ENCODE measurements at regions of chrX and their contacts with region 1.

Region 1: DNA sequence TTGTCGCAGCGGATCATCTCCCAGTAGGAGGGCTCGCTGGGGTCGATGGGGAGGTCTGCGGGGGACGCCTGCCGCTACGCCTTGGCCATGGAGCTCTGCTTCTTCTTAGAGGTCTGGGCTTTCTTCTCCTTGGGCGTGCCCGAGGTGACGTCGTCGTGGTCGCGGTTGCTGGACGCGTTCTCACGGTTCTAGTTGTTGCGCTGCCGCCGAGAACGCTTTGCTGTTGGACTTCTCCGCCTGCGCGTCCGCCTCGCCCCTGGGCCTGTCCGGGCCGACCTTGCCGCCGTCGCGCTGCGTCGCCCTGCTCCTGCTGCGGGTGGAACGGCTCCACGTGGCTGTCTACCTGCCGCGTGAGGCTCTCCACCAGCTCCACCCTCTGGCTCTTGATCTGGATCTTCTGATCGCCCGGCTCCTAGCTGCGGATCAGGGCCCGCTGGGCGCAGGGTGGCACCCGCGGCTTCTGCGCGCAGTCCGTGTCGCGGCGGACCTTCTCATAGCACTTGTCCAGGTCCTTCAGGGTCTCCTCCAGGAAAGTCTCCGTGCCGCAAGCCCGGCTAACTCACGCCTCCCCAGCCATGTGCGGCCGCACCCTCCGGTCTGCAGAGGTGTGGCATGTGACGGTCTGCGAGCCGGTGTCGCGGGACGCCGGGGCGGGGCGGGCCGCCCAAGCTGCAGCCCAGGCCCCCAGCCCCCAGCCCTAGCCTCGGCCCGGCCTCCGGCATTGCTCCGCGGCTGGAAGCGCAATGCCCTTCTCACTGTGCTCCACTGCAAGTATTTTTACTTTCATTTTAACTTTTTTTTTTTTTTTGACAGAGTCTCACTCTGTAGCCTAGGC is 40.5 kb upstream of the OGT start:
- DNase-seq: peak; percentile 77
- H3K4me3 ChIP-seq: peak overlapping the region; percentile 33 to 61 (median 56)
- H3K27ac ChIP-seq: peak overlapping the region in 3 of 4 donors; percentile 39 to 65 (median 44)
- H3K4me1 ChIP-seq: peaks cover 0 to 5% (median 0%) of the 10 kb centered on the region in 4 donors
- H3K27me3 ChIP-seq: no peaks in the 10 kb centered on the region
- CTCF ChIP-seq: no peak
- EP300 ChIP-seq: no peak
- POLR2A ChIP-seq: no peak

Region 2: DNA sequence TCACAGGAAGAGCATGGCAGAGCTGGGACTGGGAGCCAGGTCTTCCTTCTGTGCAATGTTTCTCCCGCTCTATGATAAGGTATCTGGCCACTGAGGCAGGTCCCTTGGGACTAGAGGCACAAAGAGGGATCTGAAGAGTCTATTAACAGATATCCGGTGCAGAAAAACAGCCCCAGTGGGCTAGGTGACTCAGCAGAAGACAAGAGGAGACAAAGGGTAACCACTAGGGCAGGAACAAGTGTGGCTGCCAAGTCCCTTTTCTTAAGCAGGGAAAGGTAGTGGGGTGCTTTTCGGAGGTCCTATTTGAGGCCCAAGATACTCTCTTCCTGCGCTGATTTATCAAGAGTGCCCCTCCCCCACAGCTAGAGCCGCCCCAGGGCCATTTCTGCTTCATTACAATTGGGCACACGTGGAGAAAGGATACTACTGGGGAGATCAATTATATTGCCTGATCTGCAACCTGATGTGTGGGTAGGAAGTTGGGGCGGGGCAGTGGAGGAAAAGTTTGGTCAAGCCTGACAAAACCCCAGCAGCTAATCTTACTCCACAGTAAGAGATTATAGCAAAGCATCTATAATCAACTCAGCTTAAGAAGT is 1315.4 kb before region 1 on chrX and contains the start of gene DGAT2L6:
- intact Hi-C with region 1: no loop called
- DNase-seq: no peak
- H3K4me3 ChIP-seq: no peak within 1 kb of the TSS
- H3K27ac ChIP-seq: no peak within 1 kb of the TSS
- H3K4me1 ChIP-seq: no peaks in the 10 kb centered on the region
- H3K27me3 ChIP-seq: no peaks in the 10 kb centered on the region
- CTCF ChIP-seq: no peak
- EP300 ChIP-seq: no peak
- POLR2A ChIP-seq: no peak
- total RNA-seq, gene DGAT2L6: not detected

Region 3: DNA sequence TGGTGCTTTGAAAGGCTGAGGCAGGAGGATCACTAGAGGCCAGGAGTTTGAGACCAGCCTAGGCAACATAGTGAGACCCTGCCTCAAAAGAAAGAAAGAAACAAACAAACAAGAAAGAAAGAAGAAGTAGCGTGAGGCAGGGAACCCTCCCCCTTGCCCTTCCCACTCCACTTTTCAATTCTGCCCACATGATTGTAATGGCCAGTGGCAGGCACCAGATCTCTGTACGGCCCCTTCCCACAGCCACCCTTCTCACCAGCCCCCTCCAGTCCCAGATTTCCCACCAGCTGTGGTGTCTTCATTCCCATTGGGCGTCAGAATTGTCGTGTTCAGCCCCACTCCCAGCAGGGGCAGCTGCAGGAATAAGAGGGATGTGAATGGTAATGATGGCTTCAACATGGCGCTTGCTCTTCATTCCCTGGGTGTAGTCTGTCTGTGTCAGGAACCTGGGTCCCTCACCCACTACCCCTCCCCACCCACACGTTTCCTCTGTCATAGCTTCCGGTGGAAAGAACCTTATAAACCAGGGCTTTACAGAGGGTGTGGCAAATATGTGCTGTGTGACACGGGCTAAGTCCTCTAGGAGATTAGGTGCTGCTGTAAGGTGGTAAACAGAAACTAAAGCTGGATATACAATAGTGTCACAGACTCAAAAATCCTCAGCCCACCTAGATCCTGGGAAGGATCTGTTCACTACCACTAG is 381.2 kb before region 1 on chrX and contains the start of gene IL2RG:
- intact Hi-C with region 1: no loop called
- DNase-seq: no peak
- H3K4me3 ChIP-seq: no peak within 1 kb of the TSS
- H3K27ac ChIP-seq: no peak within 1 kb of the TSS
- H3K4me1 ChIP-seq: no peaks in the 10 kb centered on the region
- H3K27me3 ChIP-seq: no peaks in the 10 kb centered on the region
- CTCF ChIP-seq: no peak
- EP300 ChIP-seq: no peak
- POLR2A ChIP-seq: peak in 1 of 2 donors; percentile 20
- total RNA-seq, gene IL2RG: 1.7 to 8.1 (median 3.2) TPM in 3 of 4 donors, not detected in the other

Region 4: DNA sequence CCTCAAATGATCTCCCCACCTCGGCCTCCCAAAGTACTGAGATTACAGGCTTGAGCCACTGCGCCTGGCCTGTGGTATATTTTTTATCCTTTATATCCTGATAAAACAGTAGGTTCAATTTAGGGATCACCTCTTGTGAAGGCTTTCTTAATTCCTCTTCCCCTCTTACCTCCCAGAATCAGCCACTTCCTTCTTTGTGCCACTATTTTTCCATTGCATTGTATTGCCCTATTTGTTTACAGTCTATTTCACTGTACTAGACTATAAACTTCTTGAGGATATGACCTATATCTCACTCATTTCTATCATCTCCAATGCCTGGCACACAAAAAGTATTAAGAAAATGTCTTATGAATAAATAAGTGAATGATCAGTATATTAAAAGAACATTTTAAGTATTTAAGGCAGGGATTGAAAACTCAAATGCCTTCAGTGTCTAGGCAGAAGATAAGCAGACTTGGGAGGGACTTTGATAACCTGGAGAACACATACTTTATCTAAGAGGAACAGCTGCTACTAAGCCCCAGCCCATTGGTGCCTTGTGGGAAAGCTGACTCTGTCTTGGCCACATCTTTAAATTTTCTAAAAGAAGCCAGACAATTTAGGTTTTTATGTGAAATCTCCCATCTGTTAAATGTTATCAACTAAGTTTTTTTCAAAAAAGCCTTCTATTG is 41.9 kb before region 1 on chrX:
- intact Hi-C with region 1: no loop called
- DNase-seq: no peak
- H3K4me3 ChIP-seq: no peak overlapping the region
- H3K27ac ChIP-seq: no peak overlapping the region
- H3K4me1 ChIP-seq: no peaks in the 10 kb centered on the region
- H3K27me3 ChIP-seq: no peaks in the 10 kb centered on the region
- CTCF ChIP-seq: no peak
- EP300 ChIP-seq: no peak
- POLR2A ChIP-seq: no peak

Region 5: GRCh38 chrX:71532753-71533425 is 40.4 kb after region 1 on chrX and contains the start of gene OGT:
- intact Hi-C with region 1: loop called (anchors 5 kb)
- DNase-seq: peak; percentile 98
- H3K4me3 ChIP-seq: peak within 1 kb of the TSS; percentile 61 to 73 (median 66)
- H3K27ac ChIP-seq: peak within 1 kb of the TSS; percentile 85 to 91 (median 88)
- H3K4me1 ChIP-seq: peaks cover 0 to 9% (median 4%) of the 10 kb centered on the region in 4 donors
- H3K27me3 ChIP-seq: no peaks in the 10 kb centered on the region
- CTCF ChIP-seq: no peak
- EP300 ChIP-seq: no peak
- POLR2A ChIP-seq: peak; percentile 29 to 32
- total RNA-seq, gene OGT: 104 to 201 (median 122) TPM

Measured in sigmoid colon (tissue), 7 donors.